HCT116 (cell line): ENCODE measurements at regions of chr6 and their contacts with region 1.

Region 1: DNA sequence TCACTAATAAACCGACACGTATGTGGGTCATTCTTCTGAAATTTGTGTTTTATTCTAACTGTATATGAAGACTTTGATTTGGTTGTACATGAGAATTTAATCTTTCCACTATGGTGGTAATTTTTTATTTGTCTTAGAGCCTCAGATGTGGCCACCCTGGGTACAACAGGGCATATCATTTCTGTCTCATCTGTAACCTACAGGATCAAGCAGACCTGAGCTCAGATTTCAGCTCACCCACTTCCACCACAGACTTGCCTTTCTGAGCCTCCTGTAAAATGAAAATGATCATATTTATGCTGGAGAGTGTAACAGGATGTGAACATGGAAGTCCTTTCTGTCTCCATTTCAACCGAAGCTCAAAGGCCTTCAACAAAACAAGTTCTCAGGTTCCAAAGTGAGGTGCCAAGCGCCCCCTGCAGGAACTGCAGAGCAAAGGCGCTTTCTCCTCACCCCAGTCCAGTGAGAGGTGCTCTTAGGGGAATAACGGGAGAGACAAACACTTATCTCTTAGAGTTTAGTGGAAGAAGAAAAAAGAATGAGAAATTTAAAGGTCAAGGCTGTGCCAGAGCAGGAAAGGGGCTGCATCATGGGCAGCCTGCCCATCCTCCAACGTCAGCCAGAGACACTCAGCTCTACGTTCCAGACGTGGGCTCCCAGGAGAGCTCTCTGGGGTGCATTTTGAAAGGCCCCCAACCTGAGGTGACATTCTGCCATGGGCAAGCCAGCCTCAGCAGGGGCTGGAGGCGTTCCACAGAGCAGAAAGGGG is 23.0 kb upstream of the CD24 start:
- DNase-seq: peak; percentile 47
- ATAC-seq: peak; percentile 93
- H3K4me3 ChIP-seq: no peak overlapping the region
- H3K27ac ChIP-seq: no peak overlapping the region
- H3K4me1 ChIP-seq: peaks cover 0 to 5% of the 10 kb centered on the region in 2 experiments; a peak in 1 of 4 replicates
- H3K27me3 ChIP-seq: no peaks in the 10 kb centered on the region
- CTCF ChIP-seq: peak; percentile 72 to 99 (median 98); a peak in 5 of 6 replicates
- POLR2A ChIP-seq: no peak
- RAD21 ChIP-seq: peak; percentile 82

Region 2: DNA sequence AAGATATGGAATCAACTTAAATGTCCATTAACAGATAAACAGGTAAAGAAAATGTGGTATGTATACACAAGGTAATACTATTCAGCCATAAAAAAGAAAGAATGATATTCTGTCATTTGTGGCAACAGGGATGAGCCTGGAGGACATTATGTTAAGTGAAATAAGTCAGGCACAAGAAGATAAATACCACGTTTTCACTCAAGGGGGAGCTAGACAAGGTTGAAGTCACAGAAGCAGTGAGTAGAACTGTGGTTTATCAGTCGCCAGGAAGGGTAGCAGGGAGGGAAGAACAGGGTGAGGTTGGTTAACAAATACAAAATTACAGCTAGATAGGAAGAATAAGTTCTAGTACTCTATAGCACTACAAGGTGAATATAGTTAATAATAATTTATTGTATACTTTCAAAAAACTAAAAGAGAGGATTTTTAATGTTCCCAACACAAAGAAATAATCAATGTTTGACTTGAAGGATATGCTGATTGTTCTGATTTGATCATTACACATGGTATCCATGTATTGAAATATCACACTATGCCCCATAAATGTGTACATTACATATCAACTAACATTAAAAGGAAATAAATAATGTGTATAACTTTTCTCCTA is 389.4 kb before region 1 on chr6:
- CTCF ChIA-PET with region 1: interaction called, 8 read pairs
- POLR2A ChIA-PET with region 1: no interaction called
- RAD21 ChIA-PET with region 1: no interaction called
- intact Hi-C with region 1: loop called (anchors 5 kb)
- DNase-seq: peak; percentile 64
- ATAC-seq: peak; percentile 91
- H3K4me3 ChIP-seq: no peak overlapping the region
- H3K27ac ChIP-seq: no peak overlapping the region
- H3K4me1 ChIP-seq: no peaks in the 10 kb centered on the region
- H3K27me3 ChIP-seq: no peaks in the 10 kb centered on the region
- CTCF ChIP-seq: peak; percentile 57 to 68 (median 60); a peak in 5 of 6 replicates
- POLR2A ChIP-seq: no peak
- RAD21 ChIP-seq: peak; percentile 61